Activated B cell treated with CpG ODN at 0.5 μM for 24 hours (primary cell): ENCODE measurements at regions of chr17 and their contacts with region 1.

Region 1: GRCh38 chr17:38809828-38810227 is 10.5 kb upstream of the PIP4K2B start:
- DNase-seq: no peak
- ATAC-seq: no peak
- H3K4me3 Mint-ChIP-seq: no peak overlapping the region
- H3K27ac Mint-ChIP-seq: no peak overlapping the region
- H3K4me1 Mint-ChIP-seq: peaks cover 3% of the 10 kb centered on the region
- H3K27me3 Mint-ChIP-seq: no peaks in the 10 kb centered on the region
- CTCF ChIP-seq: no peak

Region 2: DNA sequence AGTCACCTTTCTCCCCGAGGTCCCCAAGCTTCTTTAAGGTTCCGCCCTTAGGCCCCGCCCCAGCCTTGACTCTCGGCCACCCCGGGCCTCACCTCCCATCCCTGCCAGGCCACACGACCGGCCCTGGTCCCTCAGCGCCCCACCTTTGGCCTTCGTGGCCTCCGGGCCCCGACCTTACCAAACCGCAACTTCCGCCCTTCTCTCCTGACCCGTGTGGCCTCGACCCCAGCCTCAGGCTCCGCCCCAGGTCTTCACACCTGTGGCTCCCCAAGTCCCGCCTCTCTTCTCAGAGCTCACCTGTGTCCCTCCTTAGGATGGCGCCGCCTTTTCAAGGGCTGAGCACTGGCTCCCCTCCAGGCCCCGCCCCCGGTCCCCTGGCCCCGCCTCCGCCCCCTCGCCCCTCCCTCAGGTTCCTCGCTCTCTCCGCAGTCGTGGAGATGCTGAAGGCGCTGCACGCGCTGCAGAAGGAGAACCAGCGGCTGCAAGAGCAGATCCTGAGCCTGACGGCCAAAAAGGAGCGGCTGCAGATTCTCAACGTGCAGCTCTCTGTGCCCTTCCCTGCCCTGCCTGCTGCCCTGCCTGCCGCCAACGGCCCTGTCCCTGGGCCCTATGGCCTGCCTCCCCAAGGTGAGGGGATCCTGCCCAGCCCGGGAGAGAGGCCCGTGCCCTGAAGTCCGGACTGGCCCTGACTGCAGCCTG is 89.7 kb before region 1 on chr17:
- CTCF ChIA-PET with region 1: no interaction called
- POLR2A ChIA-PET with region 1: interaction called, 12 read pairs
- intact Hi-C with region 1: no loop called
- DNase-seq: no peak
- ATAC-seq: no peak
- H3K4me3 Mint-ChIP-seq: no peak overlapping the region
- H3K27ac Mint-ChIP-seq: no peak overlapping the region
- H3K4me1 Mint-ChIP-seq: peaks cover 20% of the 10 kb centered on the region
- H3K27me3 Mint-ChIP-seq: no peaks in the 10 kb centered on the region
- CTCF ChIP-seq: no peak

Region 3: DNA sequence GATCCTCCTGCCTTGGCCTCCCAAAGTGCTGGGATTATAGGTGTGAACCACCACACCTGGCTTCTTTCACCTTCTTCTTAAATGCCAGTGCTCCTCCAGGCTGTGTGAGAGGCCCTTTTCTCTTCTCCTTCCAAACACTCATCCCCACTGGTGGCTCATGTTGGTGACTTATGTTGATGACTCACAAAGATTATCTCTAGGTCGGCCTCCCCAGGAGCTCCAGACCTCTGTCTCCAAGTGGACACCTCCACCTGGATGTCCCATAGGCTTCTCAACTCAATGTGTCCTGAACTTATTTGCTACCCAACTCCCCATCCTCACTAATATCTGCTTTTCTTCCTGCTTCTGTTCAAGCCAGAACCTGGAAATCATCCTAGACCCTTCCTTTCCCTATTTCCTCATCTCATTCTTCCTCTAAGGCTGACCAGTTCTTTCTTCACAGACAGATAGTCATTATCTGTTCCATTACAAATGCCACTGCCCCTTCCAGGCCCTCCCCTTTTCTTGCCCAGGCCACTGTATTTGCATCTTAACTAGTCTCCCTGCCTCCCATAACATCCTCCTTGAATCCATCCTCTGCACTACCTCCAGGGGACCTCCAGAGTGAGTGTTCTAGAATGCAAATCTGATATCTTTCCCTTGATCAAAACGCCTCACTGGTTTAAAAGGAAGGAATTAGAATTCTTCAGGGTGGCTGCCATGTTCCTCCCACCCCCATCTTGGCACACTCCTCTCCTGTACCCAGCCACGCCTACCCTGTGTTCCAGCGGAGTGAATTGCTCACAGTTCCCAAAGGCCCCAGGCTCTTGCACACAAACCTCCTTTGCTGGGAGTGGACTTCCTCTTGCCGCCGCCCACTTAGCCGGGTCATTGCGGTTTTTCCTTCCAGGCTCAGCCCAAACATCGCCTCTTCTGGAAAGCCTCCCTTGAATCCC is 192.1 kb after region 1 on chr17:
- CTCF ChIA-PET with region 1: no interaction called
- POLR2A ChIA-PET with region 1: no interaction called
- intact Hi-C with region 1: no loop called
- DNase-seq: no peak
- ATAC-seq: no peak
- H3K4me3 Mint-ChIP-seq: no peak overlapping the region
- H3K27ac Mint-ChIP-seq: no peak overlapping the region
- H3K4me1 Mint-ChIP-seq: peaks cover 2% of the 10 kb centered on the region
- H3K27me3 Mint-ChIP-seq: peaks cover 33% of the 10 kb centered on the region
- CTCF ChIP-seq: no peak